ENCODE measurements at regions of chr13 and their contacts with region 1.

Region 1: GRCh38 chr13:32905063-32905863 is 111.0 kb upstream of the KL start:
- DNase-seq: peak; percentile 40
- H3K4me3 Mint-ChIP-seq: peak overlapping the region; percentile 44
- H3K27ac Mint-ChIP-seq: peak overlapping the region; percentile 87
- H3K4me1 Mint-ChIP-seq: peaks cover 19% of the 10 kb centered on the region
- H3K27me3 Mint-ChIP-seq: peaks cover 33% of the 10 kb centered on the region

Region 2: GRCh38 chr13:32650705-32651311 is 254.5 kb before region 1 on chr13:
- CTCF ChIA-PET with region 1: no interaction called
- POLR2A ChIA-PET with region 1: no interaction called
- intact Hi-C with region 1: loop called (anchors 1 kb)
- DNase-seq: peak; percentile 78
- H3K4me3 Mint-ChIP-seq: no peak overlapping the region
- H3K27ac Mint-ChIP-seq: no peak overlapping the region
- H3K4me1 Mint-ChIP-seq: peaks cover 46% of the 10 kb centered on the region
- H3K27me3 Mint-ChIP-seq: no peaks in the 10 kb centered on the region

Region 3: DNA sequence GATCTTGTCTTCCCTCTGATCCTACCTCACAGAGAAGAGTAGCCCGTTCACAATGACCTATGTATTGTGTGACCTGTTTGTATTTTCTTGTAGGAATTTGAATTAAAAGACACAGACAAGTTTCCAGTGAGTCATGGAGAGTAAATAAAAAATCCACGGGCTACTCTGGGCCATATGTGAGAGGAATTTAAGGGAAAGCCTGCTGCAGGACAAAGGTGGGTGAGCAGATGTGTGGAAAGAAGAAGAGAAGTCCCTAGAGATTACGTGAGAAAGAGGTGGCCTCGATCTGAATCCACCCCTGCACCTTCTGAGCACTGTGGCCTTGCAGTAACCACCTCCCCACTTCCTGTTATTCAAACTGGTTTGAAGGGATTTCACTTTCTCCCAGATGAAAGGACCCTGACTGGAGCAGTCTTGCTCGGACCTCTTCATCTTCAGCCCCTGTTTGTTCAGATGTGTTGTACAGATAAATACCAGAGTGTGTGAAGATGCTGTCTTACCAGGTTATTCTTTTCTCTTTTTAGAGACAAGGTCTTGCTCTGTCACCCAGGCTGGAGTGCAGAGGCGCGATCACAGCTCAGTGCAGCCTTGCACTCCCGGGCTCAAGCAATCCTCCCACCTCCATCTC is 113.6 kb before region 1 on chr13:
- CTCF ChIA-PET with region 1: no interaction called
- POLR2A ChIA-PET with region 1: no interaction called
- intact Hi-C with region 1: loop called (anchors 2 kb)
- DNase-seq: peak; percentile 59
- H3K4me3 Mint-ChIP-seq: no peak overlapping the region
- H3K27ac Mint-ChIP-seq: no peak overlapping the region
- H3K4me1 Mint-ChIP-seq: peaks cover 23% of the 10 kb centered on the region
- H3K27me3 Mint-ChIP-seq: no peaks in the 10 kb centered on the region

Region 4: DNA sequence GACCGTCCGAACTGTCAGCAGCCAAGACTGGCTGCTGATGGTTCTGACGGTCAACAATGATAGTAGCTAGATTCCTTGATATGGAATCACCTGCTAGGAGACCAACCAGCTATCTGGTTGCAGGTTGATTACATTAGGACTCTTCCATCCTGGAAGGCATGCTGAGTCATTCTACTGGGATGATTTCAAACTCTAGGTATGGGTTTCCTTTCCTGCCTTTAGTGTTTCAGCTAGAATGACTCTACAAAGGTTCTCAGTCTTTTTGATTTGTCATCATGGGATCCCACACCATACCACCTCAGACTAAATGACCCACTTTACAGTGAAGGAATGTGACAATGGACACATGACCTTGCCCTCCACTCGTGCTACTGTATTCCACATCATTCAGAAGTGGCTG is 27.1 kb before region 1 on chr13:
- CTCF ChIA-PET with region 1: no interaction called
- POLR2A ChIA-PET with region 1: no interaction called
- intact Hi-C with region 1: loop called (anchors 2 kb)
- DNase-seq: no peak
- H3K4me3 Mint-ChIP-seq: no peak overlapping the region
- H3K27ac Mint-ChIP-seq: no peak overlapping the region
- H3K4me1 Mint-ChIP-seq: no peaks in the 10 kb centered on the region
- H3K27me3 Mint-ChIP-seq: no peaks in the 10 kb centered on the region

Region 5: GRCh38 chr13:33146843-33147611 is 241.8 kb after region 1 on chr13:
- CTCF ChIA-PET with region 1: no interaction called
- POLR2A ChIA-PET with region 1: no interaction called
- intact Hi-C with region 1: loop called (anchors 1 kb)
- DNase-seq: peak; percentile 31
- H3K4me3 Mint-ChIP-seq: no peak overlapping the region
- H3K27ac Mint-ChIP-seq: peak overlapping the region; percentile 30
- H3K4me1 Mint-ChIP-seq: peaks cover 16% of the 10 kb centered on the region
- H3K27me3 Mint-ChIP-seq: peaks cover 11% of the 10 kb centered on the region

Measured in activated CD4-positive, alpha-beta memory T cell treated with anti-CD3 and anti-CD28 coated beads for 36 hours (primary cell).